Posterior vena cava (tissue), 2 donors: ENCODE measurements at regions of chr21 and their contacts with region 1.

Region 1: DNA sequence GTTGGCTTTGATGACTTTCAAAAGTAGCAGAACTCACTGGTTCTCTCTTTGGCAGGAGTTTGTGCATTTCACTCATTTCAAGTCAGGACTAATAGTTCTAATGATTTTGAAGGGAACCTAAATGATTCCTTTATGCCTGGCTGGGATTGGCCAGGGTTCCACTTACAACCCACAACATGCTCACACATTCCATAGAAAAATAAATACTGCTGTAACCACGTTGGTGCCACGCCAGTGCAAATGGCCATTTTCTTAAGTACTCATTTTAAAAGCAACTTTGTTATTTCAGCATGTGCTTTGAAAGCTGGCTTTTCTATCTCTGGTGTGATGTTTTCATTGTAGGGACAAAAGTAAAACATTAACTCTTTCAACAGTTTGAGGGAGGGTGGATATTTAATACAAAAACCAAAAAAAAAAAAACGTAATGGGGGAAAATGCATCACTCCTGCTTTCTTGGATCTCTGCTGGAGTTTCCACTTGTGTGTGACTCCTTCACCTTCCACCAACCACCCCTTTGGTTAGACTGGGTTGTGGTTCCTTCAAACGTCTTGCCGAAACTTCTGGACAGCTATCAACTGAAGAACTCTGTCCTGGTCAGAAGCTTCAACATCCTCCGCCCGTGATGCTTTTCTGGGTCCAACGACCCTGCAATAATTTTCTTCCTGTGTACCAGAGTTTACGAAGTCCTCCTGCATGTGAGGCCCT is 300.4 kb upstream of the RUNX1 start:
- DNase-seq: no peak

Region 2: DNA sequence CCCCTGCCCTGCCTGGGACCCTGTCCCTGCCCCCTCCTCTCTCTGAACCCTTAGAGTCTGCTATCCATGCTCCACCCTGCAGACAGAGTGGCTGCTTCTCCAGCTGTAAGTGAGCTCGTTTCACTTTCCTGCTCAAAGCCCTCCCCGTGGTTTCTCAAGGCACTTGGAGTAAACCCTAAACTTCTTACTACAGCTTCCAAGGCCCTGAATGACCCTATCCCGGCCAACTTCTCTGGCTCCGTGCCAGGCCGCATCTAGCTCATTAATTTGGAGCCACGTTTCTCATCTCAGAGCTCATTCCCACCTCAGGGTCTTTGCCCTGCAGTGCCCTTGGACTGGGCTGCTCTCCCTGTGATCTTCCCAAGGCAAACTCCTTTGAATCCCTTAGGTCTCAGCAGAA is 65.3 kb before region 1 on chr21:
- intact Hi-C with region 1: no loop called
- DNase-seq: peak; percentile 83

Region 3: DNA sequence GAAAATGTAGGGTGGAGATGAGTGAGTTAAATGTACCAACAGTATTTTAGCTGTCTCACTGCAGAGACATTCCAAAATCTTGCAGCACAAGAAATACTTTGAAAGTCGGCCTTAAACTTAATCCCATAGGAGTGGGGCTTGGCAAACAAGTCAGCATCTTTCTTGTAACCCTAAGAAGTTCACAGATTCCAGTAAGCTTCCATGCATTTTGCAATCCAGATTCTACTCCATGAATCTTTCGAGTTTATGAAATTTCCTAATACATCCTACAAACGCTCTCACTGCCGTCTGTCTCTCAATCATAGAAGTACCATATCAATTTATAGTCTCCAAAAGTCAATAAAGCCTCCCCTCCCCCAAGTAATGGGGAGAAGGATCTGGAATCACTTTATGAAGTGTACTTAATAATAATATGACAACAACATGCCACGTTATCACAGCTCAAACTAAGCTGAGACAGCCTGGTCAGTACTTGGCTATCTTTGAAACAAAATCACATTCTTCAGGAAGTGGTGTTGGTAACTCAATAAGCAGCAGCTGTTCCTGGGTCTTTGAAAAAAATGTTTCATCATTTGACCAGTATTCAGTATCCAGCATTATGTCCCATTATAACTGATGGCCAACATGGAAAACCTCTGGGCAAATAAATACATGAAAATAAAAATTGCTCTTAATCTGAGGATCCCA is 17.0 kb after region 1 on chr21:
- intact Hi-C with region 1: no loop called
- DNase-seq: no peak

Region 4: DNA sequence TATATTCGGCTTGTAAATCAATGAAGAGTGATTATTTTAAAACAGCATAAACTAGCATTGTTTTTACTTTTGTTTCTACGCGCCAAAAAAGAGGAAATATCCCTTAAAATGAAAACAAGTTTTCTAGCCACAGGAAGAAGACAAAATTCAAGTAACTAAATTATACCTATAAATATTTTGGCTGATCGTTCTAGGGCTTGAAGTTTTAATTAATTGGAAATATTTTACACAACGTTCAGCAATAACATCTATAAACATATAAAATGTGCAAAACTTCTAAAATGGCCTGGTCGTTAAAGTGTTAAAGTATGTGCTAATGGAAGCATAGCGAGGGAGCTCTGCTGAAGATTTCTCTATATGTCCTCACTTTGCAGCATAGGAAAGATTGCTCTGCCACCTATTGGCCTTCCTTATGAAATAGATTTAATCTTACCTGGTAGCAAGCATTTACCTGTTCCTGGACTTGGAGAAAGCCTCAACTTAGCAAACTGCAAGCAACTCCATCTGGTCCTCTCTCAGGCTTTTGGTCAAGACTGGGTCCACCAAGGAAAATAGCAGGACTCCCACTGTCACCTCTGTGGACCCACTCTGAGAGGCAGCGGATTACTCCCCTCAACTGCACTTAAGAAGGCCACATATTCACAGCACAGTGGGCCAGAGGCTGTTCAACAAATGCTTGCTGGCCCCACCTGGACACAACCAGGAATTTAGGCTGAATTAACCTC is 50.9 kb after region 1 on chr21:
- intact Hi-C with region 1: loop called in 1 of 2 experiments (anchors 2 kb)
- DNase-seq: no peak